Activated CD4-positive, alpha-beta memory T cell treated with anti-CD3 and anti-CD28 coated beads for 36 hours (primary cell): ENCODE measurements at regions of chr11 and their contacts with region 1.

Region 1: DNA sequence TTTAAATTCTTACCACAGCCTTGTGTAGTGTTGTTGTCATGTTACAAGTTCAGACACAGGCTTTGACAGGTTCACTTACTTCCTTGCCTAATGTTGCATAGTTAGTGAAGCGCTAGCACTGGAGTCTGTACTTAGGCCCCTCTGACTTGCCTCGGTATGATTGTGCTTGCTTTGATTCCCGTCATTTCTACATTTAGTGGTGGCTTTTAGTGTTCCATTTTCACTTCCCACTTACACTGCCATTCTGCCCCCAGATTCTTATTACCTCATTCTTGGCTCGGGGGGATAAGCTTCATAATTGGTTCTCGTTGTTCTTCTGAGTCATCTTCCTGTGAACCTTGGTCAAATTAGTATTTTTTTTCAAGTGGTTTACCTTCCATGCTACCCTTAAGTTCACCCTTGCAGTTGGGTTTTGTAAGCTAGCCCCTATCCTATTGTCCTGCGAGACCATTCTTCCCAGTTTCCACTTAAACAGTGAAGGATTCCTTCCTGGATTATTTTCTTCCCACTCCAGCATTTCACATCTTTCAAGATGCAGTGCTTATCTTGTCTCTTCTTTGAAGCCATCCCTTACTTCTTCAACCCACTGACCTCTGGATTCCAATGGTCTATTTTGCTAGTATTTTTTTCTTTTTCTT is 68.7 kb downstream of the DDX10 start:
- DNase-seq: peak; percentile 71
- H3K4me3 Mint-ChIP-seq: peak overlapping the region; percentile 51
- H3K27ac Mint-ChIP-seq: peak overlapping the region; percentile 82
- H3K4me1 Mint-ChIP-seq: peaks cover 52% of the 10 kb centered on the region
- H3K27me3 Mint-ChIP-seq: no peaks in the 10 kb centered on the region

Region 2: DNA sequence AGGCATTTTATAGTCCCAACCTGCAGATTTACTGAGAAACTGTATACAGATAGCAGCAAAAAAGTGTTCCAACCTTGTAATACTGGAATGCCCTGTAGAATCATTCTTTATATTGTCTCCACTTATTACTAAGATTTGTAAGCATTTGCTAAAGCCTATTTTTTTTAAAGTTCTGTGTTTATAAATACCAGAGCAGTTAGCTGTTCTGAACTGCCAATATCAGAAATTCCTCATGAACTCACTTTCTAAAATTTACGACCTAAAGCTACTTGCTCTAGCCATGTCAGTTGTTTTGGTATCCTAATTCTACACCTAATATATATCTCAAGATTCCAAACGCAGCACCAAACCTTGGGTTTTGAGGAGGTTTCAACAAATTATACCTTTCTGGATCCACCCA is 369.4 kb before region 1 on chr11:
- CTCF ChIA-PET with region 1: no interaction called
- POLR2A ChIA-PET with region 1: no interaction called
- intact Hi-C with region 1: no loop called
- DNase-seq: no peak
- H3K4me3 Mint-ChIP-seq: no peak overlapping the region
- H3K27ac Mint-ChIP-seq: no peak overlapping the region
- H3K4me1 Mint-ChIP-seq: no peaks in the 10 kb centered on the region
- H3K27me3 Mint-ChIP-seq: no peaks in the 10 kb centered on the region

Region 3: GRCh38 chr11:108497317-108498045 is 236.1 kb before region 1 on chr11:
- CTCF ChIA-PET with region 1: no interaction called
- POLR2A ChIA-PET with region 1: no interaction called
- intact Hi-C with region 1: loop called (anchors 10 kb)
- DNase-seq: peak; percentile 87
- H3K4me3 Mint-ChIP-seq: peak overlapping the region; percentile 95
- H3K27ac Mint-ChIP-seq: peak overlapping the region; percentile 99
- H3K4me1 Mint-ChIP-seq: peaks cover 16% of the 10 kb centered on the region
- H3K27me3 Mint-ChIP-seq: no peaks in the 10 kb centered on the region

Region 4: GRCh38 chr11:108697872-108698473 is 35.6 kb before region 1 on chr11:
- CTCF ChIA-PET with region 1: interaction called, 36 read pairs
- POLR2A ChIA-PET with region 1: interaction called, 3 read pairs
- intact Hi-C with region 1: loop called (anchors 1 kb)
- DNase-seq: peak; percentile 58
- H3K4me3 Mint-ChIP-seq: no peak overlapping the region
- H3K27ac Mint-ChIP-seq: no peak overlapping the region
- H3K4me1 Mint-ChIP-seq: peaks cover 2% of the 10 kb centered on the region
- H3K27me3 Mint-ChIP-seq: no peaks in the 10 kb centered on the region

Region 5: GRCh38 chr11:108752297-108752751 is 18.7 kb after region 1 on chr11:
- CTCF ChIA-PET with region 1: interaction called, 9 read pairs
- POLR2A ChIA-PET with region 1: interaction called, 3 read pairs
- intact Hi-C with region 1: loop called (anchors 1 kb)
- DNase-seq: no peak
- H3K4me3 Mint-ChIP-seq: no peak overlapping the region
- H3K27ac Mint-ChIP-seq: no peak overlapping the region
- H3K4me1 Mint-ChIP-seq: peaks cover 33% of the 10 kb centered on the region
- H3K27me3 Mint-ChIP-seq: no peaks in the 10 kb centered on the region

Region 6: GRCh38 chr11:108817971-108818370 is 84.4 kb after region 1 on chr11:
- CTCF ChIA-PET with region 1: no interaction called
- POLR2A ChIA-PET with region 1: no interaction called
- intact Hi-C with region 1: no loop called
- DNase-seq: no peak
- H3K4me3 Mint-ChIP-seq: no peak overlapping the region
- H3K27ac Mint-ChIP-seq: no peak overlapping the region
- H3K4me1 Mint-ChIP-seq: no peaks in the 10 kb centered on the region
- H3K27me3 Mint-ChIP-seq: no peaks in the 10 kb centered on the region

Region 7: DNA sequence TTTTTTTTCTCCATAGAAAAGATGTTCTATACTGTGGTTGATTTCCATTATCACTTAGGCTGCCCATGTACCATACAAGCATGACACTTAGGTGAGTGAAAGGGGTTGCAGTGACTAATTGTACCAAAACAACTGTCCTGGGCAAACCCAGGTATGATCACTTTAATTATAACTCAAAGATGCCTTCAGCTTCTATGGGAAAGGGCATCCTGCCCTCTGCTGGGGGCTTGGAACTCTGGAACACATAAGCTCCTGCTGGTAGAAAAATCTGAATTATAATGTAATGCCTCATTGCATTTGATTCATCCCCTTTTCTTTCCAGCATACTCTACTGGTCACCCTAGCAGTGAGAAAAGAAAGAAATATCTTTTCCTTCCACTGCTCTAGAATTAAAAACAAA is 137.6 kb after region 1 on chr11:
- CTCF ChIA-PET with region 1: interaction called, 4 read pairs
- POLR2A ChIA-PET with region 1: no interaction called
- intact Hi-C with region 1: loop called (anchors 5 kb)
- DNase-seq: peak; percentile 53
- H3K4me3 Mint-ChIP-seq: no peak overlapping the region
- H3K27ac Mint-ChIP-seq: no peak overlapping the region
- H3K4me1 Mint-ChIP-seq: peaks cover 10% of the 10 kb centered on the region
- H3K27me3 Mint-ChIP-seq: no peaks in the 10 kb centered on the region

Region 8: GRCh38 chr11:108926171-108926820 is 192.7 kb after region 1 on chr11:
- CTCF ChIA-PET with region 1: no interaction called
- POLR2A ChIA-PET with region 1: no interaction called
- intact Hi-C with region 1: no loop called
- DNase-seq: no peak
- H3K4me3 Mint-ChIP-seq: no peak overlapping the region
- H3K27ac Mint-ChIP-seq: no peak overlapping the region
- H3K4me1 Mint-ChIP-seq: no peaks in the 10 kb centered on the region
- H3K27me3 Mint-ChIP-seq: no peaks in the 10 kb centered on the region